AG04449 (cell line): ENCODE measurements at regions of chr5 and their contacts with region 1.

Region 1: DNA sequence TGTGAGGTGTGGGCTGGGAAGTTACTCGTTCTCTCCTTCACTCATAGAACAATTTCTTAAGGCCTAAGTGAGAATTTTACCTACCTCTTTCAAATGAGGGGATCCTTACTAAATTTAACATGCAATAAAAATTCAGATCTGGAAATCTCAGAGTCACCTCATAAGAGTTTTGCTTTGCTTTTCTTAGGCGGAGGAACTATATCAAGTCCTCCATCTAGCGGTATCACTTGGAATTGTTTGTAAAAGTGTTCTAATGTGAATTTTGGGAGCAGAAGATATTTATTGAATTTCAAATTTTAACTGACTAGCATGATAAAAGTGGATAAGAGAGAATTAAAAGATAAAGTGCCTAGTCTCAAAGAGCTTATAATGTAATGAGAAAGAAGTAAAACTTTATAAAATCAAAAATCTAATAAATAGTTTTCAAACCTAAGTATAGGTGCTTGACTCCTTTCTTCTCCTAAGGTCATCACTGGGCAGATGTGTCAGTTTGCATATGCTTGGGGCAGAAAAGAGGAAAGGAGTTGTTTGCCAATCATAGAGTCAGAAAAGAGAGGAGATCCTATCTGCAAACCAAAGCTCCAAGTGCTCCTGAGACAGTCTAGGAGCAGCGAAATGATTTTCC is 145.7 kb upstream of the DAB2 start:
- DNase-seq: no peak
- H3K4me3 ChIP-seq: no peak overlapping the region
- CTCF ChIP-seq: peak; percentile 33

Region 2: DNA sequence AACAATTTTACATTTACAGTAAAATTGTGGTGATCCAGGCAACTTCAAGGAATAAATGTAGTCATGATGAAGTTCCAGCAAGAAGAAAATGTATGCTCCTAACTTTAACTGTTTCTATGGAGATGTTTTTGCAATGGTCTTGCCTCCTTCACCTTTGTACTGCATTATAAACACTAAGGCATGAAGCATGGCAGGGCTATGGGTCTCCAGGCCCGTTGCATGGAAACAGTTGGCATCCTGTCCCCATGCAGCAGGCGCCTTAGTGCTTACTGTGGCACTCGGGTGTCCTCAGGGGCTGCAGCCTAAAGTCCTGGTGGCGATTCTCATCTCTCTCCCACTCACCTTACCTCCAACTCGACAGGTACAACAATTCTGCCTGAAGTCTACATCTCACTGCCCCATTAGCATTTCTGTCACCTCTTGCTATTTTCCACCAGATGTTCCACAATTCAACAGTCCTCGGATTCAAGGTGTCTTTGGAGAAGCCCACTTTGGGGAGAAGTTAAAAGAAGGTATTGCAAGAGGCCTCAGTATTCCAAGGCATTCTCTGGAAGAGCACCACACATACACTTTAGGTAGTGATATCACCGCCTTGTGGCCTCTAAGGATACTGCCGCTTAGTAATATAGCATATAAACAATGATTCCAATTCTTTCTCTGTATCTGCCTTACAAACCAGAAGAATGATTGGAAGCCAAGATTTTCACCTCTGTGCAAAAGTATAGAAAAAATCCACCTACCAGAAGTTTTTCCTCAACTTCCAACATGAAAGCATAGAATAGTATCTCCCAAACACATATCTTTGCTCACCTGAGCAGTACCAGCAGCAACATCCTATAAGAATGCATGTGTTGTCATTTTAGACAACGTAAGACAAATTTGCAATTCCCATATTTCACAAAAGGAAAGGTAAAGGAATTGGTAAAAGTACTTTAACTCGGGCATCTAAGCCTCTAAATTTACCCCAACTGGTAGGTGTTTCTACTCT is 1019.2 kb before region 1 on chr5:
- CTCF ChIA-PET with region 1: no interaction called
- POLR2A ChIA-PET with region 1: no interaction called
- DNase-seq: no peak
- H3K4me3 ChIP-seq: no peak overlapping the region
- CTCF ChIP-seq: peak; percentile 71

Region 3: DNA sequence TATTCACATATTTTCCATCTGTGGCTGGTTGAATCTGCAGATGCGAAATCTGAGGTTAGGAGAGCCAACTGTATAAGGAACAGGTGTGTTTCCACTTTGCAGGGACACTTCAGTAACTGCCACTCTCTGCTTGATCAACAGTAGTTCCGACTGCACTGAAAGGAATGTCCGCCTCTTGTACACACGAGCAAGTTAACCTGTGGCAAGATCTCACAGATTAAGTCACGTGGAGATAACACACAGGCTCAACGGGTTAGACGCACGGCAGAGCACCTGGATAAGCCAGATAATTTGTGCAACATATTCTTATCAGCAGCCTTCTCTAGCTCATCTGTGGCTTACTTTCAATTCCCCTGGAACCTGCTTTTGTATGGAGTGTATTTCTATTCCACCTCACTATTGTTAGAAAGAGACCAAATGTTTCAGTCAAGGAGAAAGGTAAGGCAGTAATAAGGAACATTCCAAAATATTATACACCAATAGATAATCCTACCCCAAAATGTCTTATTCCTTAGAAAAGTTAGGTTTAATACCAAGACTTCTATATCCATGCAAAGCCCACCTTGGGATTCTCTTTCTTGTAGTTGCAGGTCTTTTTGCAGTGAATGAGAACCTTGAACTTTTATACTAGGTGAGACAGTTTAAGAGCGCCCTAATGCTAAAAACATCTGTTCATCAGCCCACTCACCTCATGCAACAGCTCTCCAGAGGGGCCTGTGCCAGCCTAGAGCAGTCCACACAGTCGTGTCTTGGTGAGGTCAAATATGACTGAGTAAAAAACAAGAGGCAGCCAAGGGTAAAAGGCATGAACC is 199.8 kb before region 1 on chr5:
- CTCF ChIA-PET with region 1: interaction called, 76 read pairs
- POLR2A ChIA-PET with region 1: interaction called, 3 read pairs
- DNase-seq: no peak
- H3K4me3 ChIP-seq: no peak overlapping the region
- CTCF ChIP-seq: no peak

Region 4: DNA sequence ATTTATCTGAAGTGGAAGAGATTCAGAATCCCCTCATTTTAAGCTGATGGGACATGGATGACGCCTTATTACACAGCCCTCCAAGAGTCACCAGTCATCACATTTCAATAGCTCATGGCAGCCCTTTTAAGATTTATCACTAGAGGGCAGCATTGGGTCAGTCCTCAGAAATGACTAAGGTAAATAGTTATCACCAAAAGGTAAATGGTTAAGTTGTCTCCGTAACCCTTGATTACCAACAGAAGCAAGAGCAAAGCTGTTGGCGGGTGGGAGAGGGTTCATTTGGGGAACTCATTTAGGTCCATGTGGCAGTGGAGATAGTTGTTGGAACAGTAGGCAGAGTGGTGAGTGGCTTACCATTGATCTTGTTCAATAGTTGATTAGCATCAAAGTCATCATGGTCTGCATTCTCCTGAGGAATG is 194.2 kb before region 1 on chr5:
- CTCF ChIA-PET with region 1: interaction called, 76 read pairs
- POLR2A ChIA-PET with region 1: interaction called, 3 read pairs
- DNase-seq: no peak
- H3K4me3 ChIP-seq: no peak overlapping the region
- CTCF ChIP-seq: peak; percentile 41

Region 5: GRCh38 chr5:39381376-39381775 is 189.1 kb before region 1 on chr5:
- CTCF ChIA-PET with region 1: interaction called, 76 read pairs
- POLR2A ChIA-PET with region 1: interaction called, 3 read pairs
- DNase-seq: no peak
- H3K4me3 ChIP-seq: no peak overlapping the region
- CTCF ChIP-seq: no peak

Region 6: DNA sequence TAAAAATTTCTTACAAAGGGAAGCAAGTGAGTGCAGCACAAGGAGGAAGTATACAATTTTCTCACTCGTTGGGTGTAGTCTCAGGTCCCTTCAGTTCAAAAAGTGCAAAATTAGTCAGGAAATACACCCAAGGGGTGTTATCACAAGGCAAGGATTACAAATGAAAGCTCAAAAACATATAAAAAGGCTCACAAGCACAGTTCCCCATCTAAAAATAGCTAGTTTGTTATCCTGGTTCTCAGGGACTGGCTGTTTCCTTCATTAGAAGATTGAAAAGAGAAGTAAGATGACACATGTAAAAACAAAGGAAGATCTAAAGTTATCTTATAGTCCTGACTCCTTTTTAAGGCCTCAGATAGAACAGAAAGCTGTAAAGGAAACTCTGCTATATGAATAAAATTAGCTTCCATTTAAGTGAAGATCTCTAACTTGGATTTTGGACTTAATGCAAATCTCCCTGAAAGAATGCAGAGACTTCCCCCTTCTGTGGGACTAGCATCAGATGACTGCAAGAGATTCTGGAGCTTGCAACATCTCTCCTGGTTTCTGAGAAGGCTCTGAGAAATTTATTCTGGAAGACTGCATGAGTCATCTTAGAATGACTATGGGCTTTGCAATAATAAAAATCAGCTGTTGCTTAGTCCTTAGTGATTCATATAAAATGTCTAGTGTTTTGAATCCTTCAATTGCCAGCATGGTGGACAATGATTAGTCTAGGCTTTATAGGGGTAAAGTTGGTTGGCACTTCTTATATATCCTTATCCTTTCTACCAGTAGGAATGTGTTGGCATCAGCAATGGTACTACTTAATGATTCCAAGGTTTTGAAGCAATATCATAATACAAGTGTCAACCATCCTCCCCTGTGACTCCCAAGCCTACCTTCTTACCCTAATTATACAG is 171.1 kb before region 1 on chr5:
- CTCF ChIA-PET with region 1: interaction called, 11 read pairs
- POLR2A ChIA-PET with region 1: no interaction called
- DNase-seq: peak; percentile 94
- H3K4me3 ChIP-seq: no peak overlapping the region
- CTCF ChIP-seq: no peak